ENCODE measurements at regions of chr12 and their contacts with region 1.

Region 1: GRCh38 chr12:104108755-104109445 is 29.1 kb downstream of the NFYB start:
- H3K4me3 ChIP-seq: no peak overlapping the region
- H3K27ac ChIP-seq: no peak overlapping the region
- H3K4me1 ChIP-seq: no peaks in the 10 kb centered on the region
- CTCF ChIP-seq: peak; percentile 51

Region 2: GRCh38 chr12:104057771-104058197 is 51.1 kb before region 1 on chr12:
- CTCF ChIA-PET with region 1: interaction called, 24 read pairs
- POLR2A ChIA-PET with region 1: no interaction called
- H3K4me3 ChIP-seq: no peak overlapping the region
- H3K27ac ChIP-seq: no peak overlapping the region
- H3K4me1 ChIP-seq: no peaks in the 10 kb centered on the region
- CTCF ChIP-seq: 0 out of 2 replicates have a peak, but pooled peaks have one; percentile 19

Region 3: GRCh38 chr12:104064031-104064822 is 44.7 kb before region 1 on chr12 and contains the start of gene HCFC2:
- CTCF ChIA-PET with region 1: interaction called, 24 read pairs
- POLR2A ChIA-PET with region 1: no interaction called
- H3K4me3 ChIP-seq: peak within 1 kb of the TSS; percentile 93
- H3K27ac ChIP-seq: peak within 1 kb of the TSS; percentile 82
- H3K4me1 ChIP-seq: peaks cover 3% of the 10 kb centered on the region; the same call in 1 of the 2 replicates
- CTCF ChIP-seq: peak; percentile 56; the same call in 1 of the 2 replicates

Region 4: GRCh38 chr12:104090687-104091086 is 18.2 kb before region 1 on chr12:
- CTCF ChIA-PET with region 1: interaction called, 25 read pairs
- POLR2A ChIA-PET with region 1: no interaction called
- H3K4me3 ChIP-seq: no peak overlapping the region
- H3K27ac ChIP-seq: no peak overlapping the region
- H3K4me1 ChIP-seq: no peaks in the 10 kb centered on the region
- CTCF ChIP-seq: no peak

Region 5: GRCh38 chr12:104097954-104098353 is 10.9 kb before region 1 on chr12:
- CTCF ChIA-PET with region 1: interaction called, 36 read pairs
- POLR2A ChIA-PET with region 1: no interaction called
- H3K4me3 ChIP-seq: no peak overlapping the region
- H3K27ac ChIP-seq: no peak overlapping the region
- H3K4me1 ChIP-seq: no peaks in the 10 kb centered on the region
- CTCF ChIP-seq: no peak

Region 6: GRCh38 chr12:104121001-104121400 is 12.1 kb after region 1 on chr12:
- CTCF ChIA-PET with region 1: interaction called, 42 read pairs
- POLR2A ChIA-PET with region 1: no interaction called
- H3K4me3 ChIP-seq: no peak overlapping the region
- H3K27ac ChIP-seq: no peak overlapping the region
- H3K4me1 ChIP-seq: no peaks in the 10 kb centered on the region
- CTCF ChIP-seq: no peak

Region 7: GRCh38 chr12:104147346-104147745 is 38.4 kb after region 1 on chr12:
- CTCF ChIA-PET with region 1: no interaction called
- POLR2A ChIA-PET with region 1: no interaction called
- H3K4me3 ChIP-seq: no peak overlapping the region
- H3K27ac ChIP-seq: no peak overlapping the region
- H3K4me1 ChIP-seq: no peaks in the 10 kb centered on the region
- CTCF ChIP-seq: no peak

Measured in HEK293 (cell line).